ENCODE measurements at regions of chr16 and their contacts with region 1.

Region 1: GRCh38 chr16:85027349-85027957 is at the start of gene KIAA0513:
- DNase-seq: peak; percentile 95
- H3K4me3 Mint-ChIP-seq: peak within 1 kb of the TSS; percentile 87
- H3K27ac Mint-ChIP-seq: peak within 1 kb of the TSS; percentile 95
- H3K4me1 Mint-ChIP-seq: peaks cover 33% of the 10 kb centered on the region
- H3K27me3 Mint-ChIP-seq: no peaks in the 10 kb centered on the region
- total RNA-seq, gene KIAA0513: 9.7 to 9.8 TPM

Region 2: GRCh38 chr16:84599521-84600202 is 427.8 kb before region 1 on chr16:
- CTCF ChIA-PET with region 1: no interaction called
- intact Hi-C with region 1: loop called (anchors 2 kb)
- DNase-seq: peak; percentile 83
- H3K4me3 Mint-ChIP-seq: peak overlapping the region; percentile 75
- H3K27ac Mint-ChIP-seq: peak overlapping the region; percentile 90
- H3K4me1 Mint-ChIP-seq: peaks cover 91% of the 10 kb centered on the region
- H3K27me3 Mint-ChIP-seq: no peaks in the 10 kb centered on the region

Region 3: DNA sequence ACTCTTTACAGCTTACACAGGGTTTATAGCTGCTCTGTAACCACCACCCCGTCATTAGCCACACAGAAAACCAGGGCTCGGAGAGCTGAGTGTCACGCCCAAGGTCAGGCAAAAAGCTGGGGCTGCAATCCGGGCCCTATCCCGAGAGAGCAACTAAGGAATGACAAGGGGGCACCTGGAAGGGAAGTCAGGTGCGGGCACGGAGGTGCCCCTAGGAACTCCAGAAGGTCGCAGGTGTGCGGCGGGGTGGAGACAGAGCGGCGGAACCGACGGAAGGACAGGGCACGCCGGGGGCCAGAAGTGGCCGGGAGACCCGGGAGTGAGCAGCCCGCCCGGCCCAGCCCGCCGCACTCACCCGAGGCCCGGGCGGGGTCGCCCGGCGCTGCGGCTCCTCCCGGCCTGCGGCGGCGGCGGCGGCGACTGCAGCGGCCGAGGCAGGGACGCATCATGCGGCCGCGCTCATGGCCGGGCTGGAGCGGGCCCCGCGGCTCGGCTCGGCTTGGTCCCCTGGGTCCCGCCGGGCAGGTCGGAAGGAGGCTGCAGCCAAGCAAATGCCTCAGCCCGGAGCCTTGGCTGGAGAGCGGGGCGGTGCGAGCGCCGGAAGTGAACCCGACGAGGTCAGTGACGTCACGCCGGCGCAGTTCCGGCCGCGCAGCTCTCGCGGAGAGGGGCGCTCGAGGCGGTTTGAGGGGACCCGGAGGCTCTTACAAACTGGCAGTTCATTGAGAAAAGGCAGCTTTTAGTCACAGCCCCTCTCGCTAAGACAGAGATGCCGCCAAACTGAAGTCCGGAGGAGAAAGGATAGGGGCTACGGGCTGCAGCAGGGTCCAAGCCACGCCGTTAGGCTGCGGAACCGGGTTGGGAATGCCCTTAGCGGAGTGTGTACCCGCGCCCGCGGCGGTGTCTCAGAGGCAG is 16.3 kb before region 1 on chr16 and contains the start of gene ZDHHC7:
- CTCF ChIA-PET with region 1: interaction called, 6 read pairs
- intact Hi-C with region 1: loop called (anchors 1 kb)
- DNase-seq: peak; percentile 87
- H3K4me3 Mint-ChIP-seq: peak within 1 kb of the TSS; percentile 98
- H3K27ac Mint-ChIP-seq: peak within 1 kb of the TSS; percentile 98
- H3K4me1 Mint-ChIP-seq: peaks cover 31% of the 10 kb centered on the region
- H3K27me3 Mint-ChIP-seq: no peaks in the 10 kb centered on the region
- total RNA-seq, gene ZDHHC7: 16.6 to 17.9 TPM

Region 4: DNA sequence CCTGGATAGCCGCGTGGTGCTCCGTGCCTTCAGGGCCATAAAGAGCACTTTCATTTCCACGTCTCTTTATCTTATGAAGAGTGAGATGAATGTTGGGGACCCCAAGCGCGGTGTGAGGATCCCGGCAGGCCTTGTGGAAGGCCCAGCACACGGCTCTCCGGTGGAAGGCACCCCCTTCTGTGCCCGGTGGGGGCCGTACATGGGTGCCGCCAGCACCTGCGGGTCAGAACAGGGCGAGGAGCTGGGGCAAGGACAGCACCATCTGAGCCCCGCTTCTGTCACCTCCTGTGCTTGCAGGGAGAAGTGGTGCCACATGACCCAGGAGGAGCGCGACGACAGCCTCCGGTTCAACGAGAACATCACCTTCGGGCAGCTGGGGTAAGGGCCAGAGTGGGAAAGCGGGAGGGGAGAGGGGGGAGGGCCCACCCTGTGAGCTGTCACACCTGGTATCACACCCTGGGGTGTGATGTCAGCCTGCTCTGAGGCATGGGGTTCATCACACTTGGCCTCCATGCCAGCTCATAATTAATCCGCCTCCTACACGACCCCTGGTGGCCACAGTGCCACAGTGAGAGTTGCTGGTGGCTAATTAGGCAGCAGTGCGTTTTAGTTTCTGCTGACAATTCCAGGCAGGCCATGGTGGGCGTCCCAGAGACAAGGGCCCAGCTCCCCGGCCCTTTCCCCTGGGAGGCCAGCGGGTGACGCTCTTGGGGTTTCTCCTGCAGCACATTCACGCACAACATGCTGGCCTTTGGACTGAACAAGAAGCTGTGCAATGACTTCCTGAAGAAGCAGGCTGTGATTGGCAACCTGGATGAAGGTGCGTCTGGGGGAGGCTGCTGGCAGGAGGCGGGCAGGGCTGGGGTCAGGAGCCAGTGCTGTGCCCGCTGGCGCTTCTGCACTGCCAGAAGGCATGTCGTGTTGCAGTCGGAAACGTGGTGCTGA is 59.2 kb after region 1 on chr16:
- CTCF ChIA-PET with region 1: interaction called, 20 read pairs
- intact Hi-C with region 1: loop called (anchors 1 kb)
- DNase-seq: peak; percentile 88
- H3K4me3 Mint-ChIP-seq: no peak overlapping the region
- H3K27ac Mint-ChIP-seq: no peak overlapping the region
- H3K4me1 Mint-ChIP-seq: peaks cover 23% of the 10 kb centered on the region
- H3K27me3 Mint-ChIP-seq: no peaks in the 10 kb centered on the region

Region 5: GRCh38 chr16:85354686-85355514 is 327.4 kb after region 1 on chr16:
- CTCF ChIA-PET with region 1: no interaction called
- intact Hi-C with region 1: no loop called
- DNase-seq: no peak
- H3K4me3 Mint-ChIP-seq: no peak overlapping the region
- H3K27ac Mint-ChIP-seq: no peak overlapping the region
- H3K4me1 Mint-ChIP-seq: no peaks in the 10 kb centered on the region
- H3K27me3 Mint-ChIP-seq: no peaks in the 10 kb centered on the region

Region 6: DNA sequence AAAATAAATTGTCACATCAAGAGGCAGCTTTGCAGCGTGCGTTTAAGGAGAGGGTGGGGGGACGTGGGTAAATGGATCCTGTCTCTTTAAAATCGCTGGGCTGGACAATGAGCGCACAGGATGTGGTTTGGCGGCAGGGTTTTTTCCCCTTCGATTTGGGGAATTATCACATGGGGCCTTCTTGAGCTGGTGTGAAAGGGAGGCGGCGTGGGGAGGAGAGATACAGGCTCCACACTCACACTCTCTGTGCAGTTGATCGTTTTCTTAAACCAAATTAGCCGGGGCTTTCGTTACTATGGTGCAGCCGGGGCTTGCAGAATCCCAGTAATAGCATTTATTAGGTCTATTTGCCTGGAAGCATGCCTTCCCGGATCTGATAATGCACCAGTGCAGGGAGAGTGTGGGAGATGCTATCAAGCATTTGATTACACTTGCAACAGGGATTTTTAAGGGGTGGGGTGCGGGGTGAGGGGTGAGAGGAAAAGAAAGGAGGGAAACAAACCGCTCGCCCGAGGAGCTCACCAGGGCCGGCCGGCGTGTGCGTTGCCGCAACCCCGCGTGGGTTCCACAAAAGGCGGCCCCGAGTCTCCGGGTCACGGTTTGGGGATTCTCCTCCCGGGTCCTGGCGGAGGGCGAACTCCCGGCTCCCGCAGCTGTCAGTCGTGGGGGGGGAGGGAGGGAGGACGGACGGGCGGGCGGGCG is 526.8 kb after region 1 on chr16:
- CTCF ChIA-PET with region 1: no interaction called
- intact Hi-C with region 1: loop called (anchors 5 kb)
- DNase-seq: peak; percentile 93
- H3K4me3 Mint-ChIP-seq: peak overlapping the region; percentile 79
- H3K27ac Mint-ChIP-seq: peak overlapping the region; percentile 93
- H3K4me1 Mint-ChIP-seq: peaks cover 42% of the 10 kb centered on the region
- H3K27me3 Mint-ChIP-seq: no peaks in the 10 kb centered on the region